BJ (cell line): ENCODE measurements at regions of chr10 and their contacts with region 1.

Region 1: GRCh38 chr10:102917962-102918816 is at the start of gene CNNM2:
- DNase-seq: peak; percentile 99
- H3K4me3 ChIP-seq: peak within 1 kb of the TSS; percentile 97
- H3K27me3 ChIP-seq: no peaks in the 10 kb centered on the region
- CTCF ChIP-seq: no peak
- polyA plus RNA-seq, gene CNNM2: 2.1 and 3.7 TPM in 2 replicates

Region 2: GRCh38 chr10:102835007-102835482 is 83.1 kb before region 1 on chr10:
- CTCF ChIA-PET with region 1: interaction called, 36 read pairs
- POLR2A ChIA-PET with region 1: no interaction called
- DNase-seq: no peak
- H3K4me3 ChIP-seq: no peak overlapping the region
- H3K27me3 ChIP-seq: peaks cover 4% of the 10 kb centered on the region
- CTCF ChIP-seq: peak; percentile 86

Region 3: GRCh38 chr10:103045961-103046360 is 127.8 kb after region 1 on chr10:
- CTCF ChIA-PET with region 1: interaction called, 10 read pairs
- POLR2A ChIA-PET with region 1: no interaction called
- DNase-seq: no peak
- H3K4me3 ChIP-seq: no peak overlapping the region
- H3K27me3 ChIP-seq: no peaks in the 10 kb centered on the region
- CTCF ChIP-seq: no peak

Region 4: GRCh38 chr10:103062604-103063590 is 144.7 kb after region 1 on chr10:
- CTCF ChIA-PET with region 1: interaction called, 44 read pairs
- POLR2A ChIA-PET with region 1: interaction called, 3 read pairs
- DNase-seq: no peak
- H3K4me3 ChIP-seq: no peak overlapping the region
- H3K27me3 ChIP-seq: no peaks in the 10 kb centered on the region
- CTCF ChIP-seq: no peak

Region 5: DNA sequence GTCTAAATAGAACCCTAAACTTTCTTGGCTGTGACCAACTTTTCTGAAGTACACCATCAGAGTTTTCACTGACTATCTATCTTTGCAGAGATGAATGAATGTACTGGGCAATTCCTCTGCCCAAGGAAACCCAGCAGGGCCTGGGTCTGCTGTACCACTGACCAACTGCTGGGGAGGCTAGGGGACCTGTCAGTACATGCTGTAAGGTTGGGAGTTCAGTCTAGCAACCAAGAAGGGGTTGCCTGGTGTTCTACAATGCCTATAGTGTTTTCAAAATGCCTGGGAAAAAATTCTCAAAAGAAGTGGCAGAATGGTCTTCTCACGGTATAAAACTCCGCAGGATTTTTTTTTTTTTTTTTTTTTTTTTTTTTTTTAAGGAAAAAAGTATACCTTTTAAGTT is 168.6 kb after region 1 on chr10:
- CTCF ChIA-PET with region 1: interaction called, 11 read pairs
- POLR2A ChIA-PET with region 1: no interaction called
- DNase-seq: no peak
- H3K4me3 ChIP-seq: no peak overlapping the region
- H3K27me3 ChIP-seq: no peaks in the 10 kb centered on the region
- CTCF ChIP-seq: 0 out of 2 replicates have a peak, but pooled peaks have one; percentile 12

Region 6: GRCh38 chr10:103333925-103334520 is 415.8 kb after region 1 on chr10:
- CTCF ChIA-PET with region 1: interaction called, 19 read pairs
- POLR2A ChIA-PET with region 1: no interaction called
- DNase-seq: no peak
- H3K4me3 ChIP-seq: no peak overlapping the region
- H3K27me3 ChIP-seq: no peaks in the 10 kb centered on the region
- CTCF ChIP-seq: peak; percentile 54